ENCODE measurements at regions of chr3 and their contacts with region 1.

Region 1: GRCh38 chr3:123449102-123449996 is 459 bp upstream of the ADCY5 start:
- DNase-seq: peak; percentile 58 to 86
- ATAC-seq: peak; percentile 69
- H3K4me3 ChIP-seq: peak overlapping the region; percentile 59 to 87
- H3K27ac ChIP-seq: peak overlapping the region; percentile 68 to 88
- H3K4me1 ChIP-seq: no peaks in the 10 kb centered on the region
- H3K27me3 ChIP-seq: no peaks in the 10 kb centered on the region

Region 2: GRCh38 chr3:123297627-123297899 is 151.8 kb before region 1 on chr3:
- intact Hi-C with region 1: no loop called
- DNase-seq: no peak
- ATAC-seq: no peak
- H3K4me3 ChIP-seq: no peak overlapping the region
- H3K27ac ChIP-seq: no peak overlapping the region
- H3K4me1 ChIP-seq: no peaks in the 10 kb centered on the region
- H3K27me3 ChIP-seq: no peaks in the 10 kb centered on the region

Region 3: DNA sequence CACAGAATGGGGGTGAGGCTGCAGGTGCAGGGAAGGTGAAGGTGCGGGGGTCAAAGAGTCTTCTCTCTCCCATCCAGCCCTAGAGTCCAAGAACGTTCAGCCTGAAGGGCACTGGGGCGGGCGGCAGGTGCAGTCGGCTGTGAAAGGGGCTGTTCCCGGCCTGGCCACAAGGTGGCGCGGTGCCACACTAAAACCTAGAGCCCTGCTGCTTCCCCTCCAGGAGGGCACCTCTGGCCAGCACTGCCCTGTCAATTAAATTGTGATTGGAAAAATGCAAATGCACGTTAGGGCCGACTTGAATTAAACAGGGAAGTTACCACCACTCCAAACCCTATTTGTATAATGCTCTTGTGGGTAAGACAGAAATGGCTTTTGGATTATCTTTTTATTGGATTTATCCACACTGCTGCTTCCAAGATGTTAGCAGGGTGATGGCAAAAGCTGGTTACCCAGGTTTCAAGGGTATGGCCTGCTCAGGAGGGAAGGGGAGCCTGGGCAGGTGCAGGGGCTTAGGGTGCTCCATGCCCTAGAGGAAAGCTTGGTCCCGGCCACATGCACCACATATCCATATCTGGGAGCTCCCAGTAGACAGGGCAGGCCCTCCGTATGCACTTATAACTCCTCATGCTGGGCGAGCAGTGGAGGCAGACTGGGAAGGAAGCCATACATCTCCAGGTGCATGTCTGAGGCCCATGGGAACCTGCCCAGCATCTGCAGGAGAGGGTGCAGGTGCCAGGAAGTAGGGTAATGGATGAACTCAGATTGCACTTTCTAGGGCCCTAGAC is 120.3 kb before region 1 on chr3:
- intact Hi-C with region 1: loop called (anchors 1 to 5 kb)
- DNase-seq: peak; percentile 83 to 94
- ATAC-seq: peak; percentile 79
- H3K4me3 ChIP-seq: no peak overlapping the region
- H3K27ac ChIP-seq: peak overlapping the region in 1 of 2 donors; percentile 95
- H3K4me1 ChIP-seq: no peaks in the 10 kb centered on the region
- H3K27me3 ChIP-seq: no peaks in the 10 kb centered on the region

Region 4: DNA sequence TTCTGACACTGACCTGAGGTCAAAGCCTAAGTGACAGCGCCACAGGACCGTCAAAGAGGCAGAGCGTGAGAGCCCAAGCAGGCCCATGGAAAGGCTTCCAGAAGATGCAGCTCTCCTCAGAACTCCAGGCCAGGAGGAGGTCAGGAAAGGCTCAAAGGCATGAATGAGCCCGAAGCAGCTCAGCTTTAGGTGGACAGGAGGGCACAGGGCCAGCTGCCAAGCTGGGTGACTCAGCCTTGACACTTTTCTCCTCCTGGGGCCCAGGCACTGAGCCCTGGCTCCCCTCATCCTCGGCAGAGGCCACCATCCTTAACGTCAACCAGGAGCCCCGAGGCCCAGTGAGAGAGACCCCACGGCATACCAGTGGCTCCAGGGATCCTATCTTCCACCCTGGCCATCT is 63.4 kb before region 1 on chr3:
- intact Hi-C with region 1: loop called in 1 of 2 experiments (anchors 5 kb)
- DNase-seq: peak; percentile 78 to 89
- ATAC-seq: peak; percentile 37
- H3K4me3 ChIP-seq: no peak overlapping the region
- H3K27ac ChIP-seq: peak overlapping the region; percentile 88 to 92
- H3K4me1 ChIP-seq: peaks cover 0 to 1% of the 10 kb centered on the region in 2 donors
- H3K27me3 ChIP-seq: no peaks in the 10 kb centered on the region

Region 5: GRCh38 chr3:123481722-123482457 is 32.5 kb after region 1 on chr3:
- intact Hi-C with region 1: loop called in 1 of 2 experiments (anchors 2 kb)
- DNase-seq: no peak
- ATAC-seq: no peak
- H3K4me3 ChIP-seq: no peak overlapping the region
- H3K27ac ChIP-seq: no peak overlapping the region
- H3K4me1 ChIP-seq: no peaks in the 10 kb centered on the region
- H3K27me3 ChIP-seq: no peaks in the 10 kb centered on the region

Region 6: GRCh38 chr3:123552095-123552714 is 102.9 kb after region 1 on chr3:
- intact Hi-C with region 1: loop called in 1 of 2 experiments (anchors 5 kb)
- DNase-seq: no peak
- ATAC-seq: no peak
- H3K4me3 ChIP-seq: no peak overlapping the region
- H3K27ac ChIP-seq: no peak overlapping the region
- H3K4me1 ChIP-seq: no peaks in the 10 kb centered on the region
- H3K27me3 ChIP-seq: no peaks in the 10 kb centered on the region

Region 7: DNA sequence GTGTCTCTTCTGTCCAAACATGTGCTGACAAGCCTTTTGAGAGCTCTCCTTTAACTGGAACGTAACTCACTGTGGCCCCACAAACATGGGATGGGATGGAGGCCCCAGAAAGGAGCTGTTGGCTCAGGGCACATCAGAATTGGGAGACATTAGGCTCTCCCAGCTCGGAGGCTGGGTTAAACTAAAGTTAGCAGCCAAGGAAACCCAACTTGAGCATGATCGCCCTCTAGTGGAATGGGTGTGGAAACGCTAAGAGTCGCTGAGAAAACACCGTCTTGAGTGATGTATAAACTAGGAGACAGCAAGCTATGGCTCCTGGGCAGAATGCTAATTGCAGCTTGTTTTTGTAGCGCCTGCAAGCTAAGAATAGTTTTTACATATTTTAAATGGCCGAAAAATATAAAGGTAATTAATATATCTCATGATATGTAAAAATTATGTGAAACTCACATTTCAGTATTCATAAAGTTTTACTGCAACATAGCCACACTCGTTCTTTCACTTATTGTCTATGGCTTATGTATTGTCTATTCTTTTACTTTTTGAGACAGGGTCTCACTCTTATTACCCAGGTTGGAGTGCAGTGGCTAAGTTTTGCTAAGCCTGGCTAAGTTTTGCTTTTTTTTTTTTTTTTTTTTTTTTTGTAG is 274.3 kb after region 1 on chr3:
- intact Hi-C with region 1: no loop called
- DNase-seq: no peak
- ATAC-seq: no peak
- H3K4me3 ChIP-seq: no peak overlapping the region
- H3K27ac ChIP-seq: peak overlapping the region in 1 of 2 donors; percentile 7
- H3K4me1 ChIP-seq: peaks cover 0 to 2% of the 10 kb centered on the region in 2 donors
- H3K27me3 ChIP-seq: no peaks in the 10 kb centered on the region